WTC11 (cell line): ENCODE measurements at regions of chr19 and their contacts with region 1.

Region 1: GRCh38 chr19:2610637-2611482 is 91.6 kb downstream of the GNG7 start:
- DNase-seq: peak; percentile 98
- ATAC-seq: peak; percentile 81
- H3K4me3 Mint-ChIP-seq: peak overlapping the region; percentile 61
- H3K27ac Mint-ChIP-seq: no peak overlapping the region
- H3K4me1 Mint-ChIP-seq: peaks cover 16% of the 10 kb centered on the region
- H3K27me3 Mint-ChIP-seq: peaks cover 17% of the 10 kb centered on the region
- CTCF ChIP-seq: peak; percentile 95

Region 2: DNA sequence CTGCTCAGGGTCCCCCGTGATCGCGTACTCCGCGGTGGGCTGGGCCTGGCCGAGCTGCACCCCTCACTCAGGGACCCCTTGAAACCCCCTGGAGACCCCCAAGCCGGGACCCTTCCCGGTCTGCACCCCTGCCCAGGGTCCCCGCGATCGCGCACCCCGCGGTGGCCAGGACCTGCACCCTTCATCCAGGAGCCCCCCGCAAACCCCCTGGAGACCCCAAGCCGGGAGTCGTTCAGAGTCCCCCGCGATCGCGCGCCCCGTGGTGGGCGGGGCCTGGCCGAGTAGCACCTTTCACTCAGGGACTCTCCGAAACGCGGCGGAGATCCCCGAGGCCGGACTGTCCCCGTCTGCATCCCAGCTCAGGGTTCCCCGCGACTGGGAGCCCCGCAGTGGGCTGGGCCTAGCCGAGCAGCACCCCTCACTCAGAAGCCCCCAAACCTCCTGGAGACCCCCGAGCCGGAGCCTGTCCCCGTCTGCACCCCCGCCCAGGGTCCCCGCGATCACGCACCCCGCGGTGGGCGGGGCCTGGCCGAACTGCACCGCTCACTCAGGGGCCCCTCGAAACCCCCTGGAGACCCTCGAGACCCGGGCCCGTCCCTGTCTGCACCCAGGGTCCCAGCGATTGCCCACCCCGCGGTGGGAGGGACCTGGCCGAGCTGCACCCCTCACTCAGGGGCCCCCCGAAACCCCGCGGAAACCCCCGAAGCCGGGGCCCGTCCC is 154.8 kb before region 1 on chr19:
- CTCF ChIA-PET with region 1: interaction called, 12 read pairs
- POLR2A ChIA-PET with region 1: interaction called, 4 read pairs
- DNase-seq: peak; percentile 28
- ATAC-seq: no peak
- H3K4me3 Mint-ChIP-seq: peak overlapping the region; percentile 75
- H3K27ac Mint-ChIP-seq: no peak overlapping the region
- H3K4me1 Mint-ChIP-seq: peaks cover 20% of the 10 kb centered on the region
- H3K27me3 Mint-ChIP-seq: no peaks in the 10 kb centered on the region
- CTCF ChIP-seq: no peak

Region 3: DNA sequence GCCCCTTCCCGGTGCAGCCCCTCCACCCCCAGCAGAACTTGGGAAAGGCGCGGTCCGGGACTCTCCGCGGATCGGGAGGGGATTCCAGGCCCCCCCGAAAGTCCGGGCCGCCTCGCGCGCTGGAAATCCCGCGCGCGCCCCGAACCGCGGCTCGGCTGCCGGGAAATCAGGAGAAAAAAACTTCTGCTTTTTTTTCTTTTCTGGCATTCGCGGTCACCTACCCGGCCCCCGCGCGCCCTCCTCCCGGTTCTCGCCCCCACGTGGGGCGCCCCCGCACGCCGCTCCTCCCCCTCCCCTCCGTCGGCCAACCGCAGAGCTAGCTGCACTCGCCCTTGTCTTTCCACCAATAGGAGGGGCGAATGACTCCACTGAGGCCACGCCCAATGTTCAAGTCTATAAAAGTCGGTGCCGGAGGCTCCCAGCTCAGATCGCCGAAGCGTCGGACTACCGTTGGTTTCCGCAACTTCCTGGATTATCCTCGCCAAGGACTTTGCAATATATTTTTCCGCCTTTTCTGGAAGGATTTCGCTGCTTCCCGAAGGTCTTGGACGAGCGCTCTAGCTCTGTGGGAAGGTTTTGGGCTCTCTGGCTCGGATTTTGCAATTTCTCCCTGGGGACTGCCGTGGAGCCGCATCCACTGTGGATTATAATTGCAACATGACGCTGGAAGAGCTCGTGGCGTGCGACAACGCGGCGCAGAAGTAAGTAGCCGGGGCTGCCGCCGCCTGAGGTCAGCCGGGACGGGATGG is 135.0 kb before region 1 on chr19 and contains the start of gene GADD45B:
- CTCF ChIA-PET with region 1: interaction called, 114 read pairs
- POLR2A ChIA-PET with region 1: interaction called, 39 read pairs
- DNase-seq: peak; percentile 95
- ATAC-seq: peak; percentile 51
- H3K4me3 Mint-ChIP-seq: peak within 1 kb of the TSS; percentile 93
- H3K27ac Mint-ChIP-seq: peak within 1 kb of the TSS; percentile 88
- H3K4me1 Mint-ChIP-seq: peaks cover 24% of the 10 kb centered on the region
- H3K27me3 Mint-ChIP-seq: peaks cover 47% of the 10 kb centered on the region
- CTCF ChIP-seq: no peak
- total RNA-seq, gene GADD45B: 17.9 to 27.5 TPM (median 23.2 TPM) in 3 replicates

Region 4: DNA sequence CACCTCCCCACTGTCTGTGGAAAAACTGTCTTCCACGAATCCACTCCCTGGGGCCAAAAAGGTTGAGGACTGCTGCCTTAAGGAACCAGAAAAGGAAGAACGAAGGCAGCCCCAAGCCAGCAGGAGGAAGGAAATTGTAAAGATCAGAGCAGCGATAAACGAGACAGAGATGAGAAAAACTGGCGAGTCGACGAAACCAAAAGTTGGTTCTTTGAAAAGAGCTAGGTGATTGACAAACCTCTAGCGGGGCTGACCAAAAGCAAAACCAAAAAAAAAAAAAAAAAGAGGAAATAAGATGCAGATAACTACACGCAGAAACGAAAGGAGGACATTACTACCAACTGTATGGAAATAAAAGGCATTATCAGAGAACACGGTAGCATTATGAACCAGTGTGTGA is 58.0 kb before region 1 on chr19:
- CTCF ChIA-PET with region 1: interaction called, 12 read pairs
- POLR2A ChIA-PET with region 1: interaction called, 4 read pairs
- DNase-seq: no peak
- ATAC-seq: no peak
- H3K4me3 Mint-ChIP-seq: no peak overlapping the region
- H3K27ac Mint-ChIP-seq: peak overlapping the region; percentile 73; the same call in 1 of the 2 replicates
- H3K4me1 Mint-ChIP-seq: peaks cover 5% of the 10 kb centered on the region
- H3K27me3 Mint-ChIP-seq: no peaks in the 10 kb centered on the region
- CTCF ChIP-seq: no peak

Region 5: GRCh38 chr19:2578901-2579677 is 31.8 kb before region 1 on chr19:
- CTCF ChIA-PET with region 1: interaction called, 61 read pairs
- POLR2A ChIA-PET with region 1: interaction called, 4 read pairs
- DNase-seq: peak; percentile 92
- ATAC-seq: peak; percentile 78
- H3K4me3 Mint-ChIP-seq: peak overlapping the region; percentile 65
- H3K27ac Mint-ChIP-seq: peak overlapping the region; percentile 92
- H3K4me1 Mint-ChIP-seq: peaks cover 14% of the 10 kb centered on the region
- H3K27me3 Mint-ChIP-seq: peaks cover 4% of the 10 kb centered on the region; the same call in 1 of the 2 replicates
- CTCF ChIP-seq: peak; percentile 54

Region 6: GRCh38 chr19:2627319-2627829 is 16.5 kb after region 1 on chr19:
- CTCF ChIA-PET with region 1: interaction called, 15 read pairs
- POLR2A ChIA-PET with region 1: no interaction called
- DNase-seq: no peak
- ATAC-seq: no peak
- H3K4me3 Mint-ChIP-seq: no peak overlapping the region
- H3K27ac Mint-ChIP-seq: peak overlapping the region; percentile 15; the same call in 1 of the 2 replicates
- H3K4me1 Mint-ChIP-seq: peaks cover 3% of the 10 kb centered on the region; the same call in 1 of the 2 replicates
- H3K27me3 Mint-ChIP-seq: no peaks in the 10 kb centered on the region; the same call in 1 of the 2 replicates
- CTCF ChIP-seq: no peak

Region 7: GRCh38 chr19:2648528-2648937 is 37.7 kb after region 1 on chr19:
- CTCF ChIA-PET with region 1: interaction called, 10 read pairs
- POLR2A ChIA-PET with region 1: no interaction called
- DNase-seq: peak; percentile 88
- ATAC-seq: peak; percentile 78
- H3K4me3 Mint-ChIP-seq: no peak overlapping the region
- H3K27ac Mint-ChIP-seq: no peak overlapping the region
- H3K4me1 Mint-ChIP-seq: no peaks in the 10 kb centered on the region
- H3K27me3 Mint-ChIP-seq: no peaks in the 10 kb centered on the region
- CTCF ChIP-seq: peak; percentile 94